GM12878 (cell line): ENCODE measurements at regions of chr2 and their contacts with region 1.

Region 1: DNA sequence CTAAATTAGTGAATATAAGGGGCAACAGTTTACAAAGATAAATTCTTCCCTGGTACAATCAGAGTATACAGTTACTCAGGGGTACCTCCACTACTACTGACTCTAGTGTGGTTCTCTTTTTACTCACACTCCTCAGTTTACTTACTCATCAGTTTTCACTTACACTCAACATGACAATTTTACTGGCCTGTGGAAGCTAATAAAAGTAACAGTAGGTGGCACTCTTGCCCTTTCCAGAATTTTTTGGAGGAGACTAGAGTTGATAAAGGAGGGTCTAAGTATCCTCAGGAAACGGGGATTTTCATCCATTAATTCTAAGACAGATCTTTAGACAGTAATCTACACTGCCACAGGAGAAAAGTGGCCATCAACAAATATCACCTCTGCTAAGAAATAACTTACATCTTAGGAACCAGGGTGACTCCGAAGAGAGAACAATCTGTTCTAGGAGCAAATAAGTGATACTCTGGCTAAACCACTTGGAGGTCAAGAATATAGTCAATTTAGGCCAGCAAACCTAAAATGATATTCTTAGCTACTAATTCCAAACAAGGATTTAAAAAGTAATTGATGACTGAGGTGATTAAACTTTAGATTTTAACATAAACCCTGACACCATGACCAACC is 61.3 kb downstream of the ATL2 start:
- DNase-seq: peak; percentile 11
- ATAC-seq: peak; percentile 76
- H3K4me3 ChIP-seq: no peak overlapping the region
- H3K27ac ChIP-seq: no peak overlapping the region
- H3K4me1 ChIP-seq: no peaks in the 10 kb centered on the region
- H3K27me3 ChIP-seq: no peaks in the 10 kb centered on the region
- CTCF ChIP-seq: peak; percentile 57 to 66 (median 66)
- EP300 ChIP-seq: no peak
- POLR2A ChIP-seq: no peak
- RAD21 ChIP-seq: peak; percentile 90

Region 2: GRCh38 chr2:38465789-38466127 is 149.9 kb after region 1 on chr2:
- CTCF ChIA-PET with region 1: interaction called, 117 read pairs
- POLR2A ChIA-PET with region 1: interaction called, 3 read pairs
- RAD21 ChIA-PET with region 1: interaction called, 40 read pairs
- SMC1A ChIA-PET with region 1: interaction called, 92 read pairs
- in situ Hi-C with region 1: no loop called
- intact Hi-C with region 1: loop called (anchors 2 kb)
- DNase-seq: no peak
- ATAC-seq: peak; percentile 94
- H3K4me3 ChIP-seq: no peak overlapping the region
- H3K27ac ChIP-seq: no peak overlapping the region
- H3K4me1 ChIP-seq: no peaks in the 10 kb centered on the region
- H3K27me3 ChIP-seq: no peaks in the 10 kb centered on the region
- CTCF ChIP-seq: peak; percentile 68 to 76 (median 68)
- EP300 ChIP-seq: no peak
- POLR2A ChIP-seq: no peak
- RAD21 ChIP-seq: peak; percentile 82

Region 3: DNA sequence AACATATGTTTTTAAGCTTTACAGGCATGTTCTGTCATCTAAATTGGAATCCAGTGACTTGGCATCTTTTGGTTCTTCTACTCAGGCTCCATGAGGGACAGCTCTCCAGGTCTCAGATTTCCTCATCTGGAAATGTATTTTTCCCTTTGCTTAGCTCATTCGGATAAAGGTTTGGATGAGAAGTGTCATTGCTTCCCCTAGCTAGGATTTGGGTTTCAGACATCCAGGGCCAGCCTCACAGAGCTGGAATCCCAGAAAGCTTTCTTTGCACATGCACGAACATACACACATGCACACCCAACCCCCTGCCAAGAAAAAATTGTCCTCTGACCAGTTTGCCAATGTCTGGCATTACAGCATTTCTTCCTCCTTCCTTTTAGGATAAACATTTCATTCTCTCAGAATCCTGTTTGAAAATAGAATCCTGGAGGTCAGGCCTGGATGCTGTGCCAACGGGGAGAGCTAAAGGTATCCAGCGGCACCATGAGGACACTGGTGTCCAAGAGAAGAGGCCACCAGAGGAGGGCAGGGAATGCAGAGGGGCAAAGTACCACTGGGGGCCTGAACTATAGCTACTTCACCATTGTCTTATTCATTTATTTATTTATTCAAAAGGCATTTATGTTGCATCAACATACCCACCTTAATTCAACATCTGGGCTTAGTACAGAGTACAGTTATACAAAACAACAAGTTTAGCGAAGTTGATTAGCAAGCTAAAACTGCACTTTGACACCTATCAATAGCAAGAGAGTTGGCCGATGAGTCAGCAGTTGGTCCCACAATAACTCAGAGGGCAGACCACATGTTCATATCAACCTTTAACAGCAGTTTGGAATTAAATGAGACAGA is 159.1 kb after region 1 on chr2:
- CTCF ChIA-PET with region 1: interaction called, 117 read pairs
- POLR2A ChIA-PET with region 1: no interaction called
- RAD21 ChIA-PET with region 1: interaction called, 3 read pairs
- SMC1A ChIA-PET with region 1: interaction called, 92 read pairs
- in situ Hi-C with region 1: no loop called
- intact Hi-C with region 1: no loop called
- DNase-seq: no peak
- ATAC-seq: peak; percentile 57
- H3K4me3 ChIP-seq: no peak overlapping the region
- H3K27ac ChIP-seq: no peak overlapping the region
- H3K4me1 ChIP-seq: peaks cover 16% of the 10 kb centered on the region
- H3K27me3 ChIP-seq: no peaks in the 10 kb centered on the region
- CTCF ChIP-seq: no peak
- EP300 ChIP-seq: no peak
- POLR2A ChIP-seq: no peak
- RAD21 ChIP-seq: no peak

Region 4: GRCh38 chr2:38515160-38516074 is 199.6 kb after region 1 on chr2:
- CTCF ChIA-PET with region 1: interaction called, 194 read pairs
- POLR2A ChIA-PET with region 1: no interaction called
- RAD21 ChIA-PET with region 1: interaction called, 79 read pairs
- SMC1A ChIA-PET with region 1: interaction called, 103 read pairs
- in situ Hi-C with region 1: no loop called
- intact Hi-C with region 1: no loop called
- DNase-seq: no peak
- ATAC-seq: no peak
- H3K4me3 ChIP-seq: no peak overlapping the region
- H3K27ac ChIP-seq: no peak overlapping the region
- H3K4me1 ChIP-seq: no peaks in the 10 kb centered on the region
- H3K27me3 ChIP-seq: no peaks in the 10 kb centered on the region
- CTCF ChIP-seq: no peak
- EP300 ChIP-seq: no peak
- POLR2A ChIP-seq: no peak
- RAD21 ChIP-seq: no peak

Region 5: DNA sequence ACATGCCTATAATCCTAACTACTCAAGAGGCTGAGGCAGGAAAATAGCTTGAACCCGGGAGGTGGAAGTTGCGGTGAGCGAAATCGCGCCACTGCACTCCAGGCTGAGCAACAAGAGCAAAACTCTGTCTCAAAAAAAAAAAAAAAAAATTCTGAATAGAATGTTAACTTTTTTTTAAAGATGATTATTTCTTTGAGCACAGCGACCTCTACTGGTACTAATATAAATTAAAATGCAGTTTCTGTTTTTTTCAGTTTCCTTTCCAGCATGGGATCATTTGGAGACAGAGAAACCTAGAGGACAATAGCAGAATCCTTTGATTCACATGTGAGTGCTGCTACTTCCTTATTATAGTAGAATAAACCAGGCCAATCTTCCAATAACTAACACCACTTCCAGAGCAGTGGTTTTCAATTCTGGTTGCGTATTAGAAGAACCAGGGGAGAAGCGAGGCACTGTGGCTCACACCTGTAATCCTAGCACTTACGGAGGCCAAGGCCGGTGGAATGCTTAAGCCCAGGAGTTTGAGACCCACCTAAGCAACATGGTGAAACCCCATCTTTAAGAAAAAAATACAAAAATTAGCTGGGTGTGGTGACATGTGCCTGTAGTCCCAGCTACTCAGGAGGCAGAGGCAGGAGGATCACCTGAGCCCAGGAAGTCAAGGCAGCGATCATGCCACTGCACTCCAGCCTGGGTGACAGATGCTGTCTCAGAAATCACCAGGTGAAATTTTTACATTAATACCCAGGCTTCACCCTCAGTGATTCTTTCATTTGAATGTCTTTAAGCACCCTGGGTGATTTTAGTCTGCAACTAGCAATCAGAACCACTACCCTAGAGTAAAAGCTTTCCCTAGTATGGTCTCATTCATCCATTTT is 425.3 kb after region 1 on chr2:
- CTCF ChIA-PET with region 1: interaction called, 3 read pairs
- POLR2A ChIA-PET with region 1: no interaction called
- RAD21 ChIA-PET with region 1: no interaction called
- SMC1A ChIA-PET with region 1: interaction called, 3 read pairs
- in situ Hi-C with region 1: loop called (anchors 5 kb)
- intact Hi-C with region 1: loop called (anchors 10 kb)
- DNase-seq: no peak
- ATAC-seq: peak; percentile 10
- H3K4me3 ChIP-seq: no peak overlapping the region
- H3K27ac ChIP-seq: no peak overlapping the region
- H3K4me1 ChIP-seq: no peaks in the 10 kb centered on the region
- H3K27me3 ChIP-seq: no peaks in the 10 kb centered on the region
- CTCF ChIP-seq: peak in 2 of 3 experiments; percentile 40 to 41; a peak in 4 of 6 replicates
- EP300 ChIP-seq: no peak
- POLR2A ChIP-seq: no peak; the same call in 1 of the 2 replicates
- RAD21 ChIP-seq: peak; percentile 41

Region 6: GRCh38 chr2:38750891-38751595 is 435.2 kb after region 1 on chr2 and contains the start of gene SRSF7:
- CTCF ChIA-PET with region 1: no interaction called
- POLR2A ChIA-PET with region 1: no interaction called
- RAD21 ChIA-PET with region 1: no interaction called
- SMC1A ChIA-PET with region 1: no interaction called
- in situ Hi-C with region 1: loop called (anchors 5 kb)
- intact Hi-C with region 1: loop called (anchors 10 kb)
- DNase-seq: peak; percentile 93
- ATAC-seq: peak; percentile 84
- H3K4me3 ChIP-seq: peak within 1 kb of the TSS; percentile 95
- H3K27ac ChIP-seq: peak within 1 kb of the TSS; percentile 97
- H3K4me1 ChIP-seq: no peaks in the 10 kb centered on the region; the same call in 1 of the 2 replicates
- H3K27me3 ChIP-seq: no peaks in the 10 kb centered on the region
- CTCF ChIP-seq: no peak
- EP300 ChIP-seq: peak in 1 of 2 experiments; percentile 76; a peak in 2 of 4 replicates
- POLR2A ChIP-seq: peak; percentile 100
- RAD21 ChIP-seq: no peak
- polyA plus RNA-seq, gene SRSF7: 753 to 785 TPM